ENCODE measurements at regions of chr13 and their contacts with region 1.

Region 1: GRCh38 chr13:86870444-86870843 is 800.7 kb upstream of the SLITRK5 start:
- DNase-seq: no peak
- H3K4me3 ChIP-seq: no peak overlapping the region
- H3K27ac ChIP-seq: no peak overlapping the region
- H3K4me1 ChIP-seq: no peaks in the 10 kb centered on the region
- H3K27me3 ChIP-seq: no peaks in the 10 kb centered on the region
- CTCF ChIP-seq: peak; percentile 67

Region 2: GRCh38 chr13:87274209-87274819 is 403.9 kb after region 1 on chr13:
- intact Hi-C with region 1: loop called (anchors 5 kb)
- DNase-seq: no peak
- H3K4me3 ChIP-seq: no peak overlapping the region
- H3K27ac ChIP-seq: no peak overlapping the region
- H3K4me1 ChIP-seq: no peaks in the 10 kb centered on the region
- H3K27me3 ChIP-seq: no peaks in the 10 kb centered on the region
- CTCF ChIP-seq: peak; percentile 62